H1 (cell line): ENCODE measurements at regions of chr9 and their contacts with region 1.

Region 1: DNA sequence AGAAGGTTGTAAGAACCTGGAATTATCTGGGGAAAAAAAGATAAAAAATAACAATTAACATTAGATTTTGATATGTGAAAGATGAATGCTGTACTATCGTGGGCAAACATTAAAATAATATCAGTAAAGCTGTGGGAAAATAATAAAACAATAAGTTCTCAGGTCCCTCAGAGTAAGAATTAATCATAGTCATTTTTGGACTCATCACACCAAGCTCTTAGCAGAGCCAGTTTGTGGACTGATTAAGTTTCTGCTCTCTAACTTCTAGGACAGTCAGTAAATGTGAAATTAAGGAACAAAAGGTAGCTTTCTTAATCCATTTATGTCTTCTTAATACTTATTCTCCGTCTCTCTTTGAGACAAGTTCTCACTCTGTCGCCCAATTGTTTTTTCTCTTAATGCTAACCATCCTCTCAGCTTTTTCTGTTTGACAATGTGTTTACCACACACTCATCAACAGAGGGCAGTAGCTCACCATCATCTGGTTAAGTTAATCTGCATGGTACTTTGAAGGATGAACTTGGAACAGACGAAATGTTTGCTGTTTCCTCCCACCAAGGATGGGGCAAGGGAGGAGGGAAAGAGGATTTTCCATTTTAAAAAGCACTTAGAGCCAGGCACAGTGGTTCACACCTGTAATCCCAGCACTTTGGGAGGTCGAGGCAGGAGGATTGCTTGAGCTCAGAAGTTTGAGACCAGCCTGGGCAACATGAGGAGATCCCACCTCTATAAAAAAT is 5.3 kb upstream of the ACO1 start:
- DNase-seq: no peak
- H3K4me3 ChIP-seq: no peak overlapping the region
- H3K27ac ChIP-seq: no peak overlapping the region
- H3K4me1 ChIP-seq: peaks cover 0 to 8% (median 1%) of the 10 kb centered on the region in 4 experiments; a peak in 2 of 7 replicates
- H3K27me3 ChIP-seq: peaks cover 2 to 15% (median 8%) of the 10 kb centered on the region in 4 experiments
- CTCF ChIP-seq: peak in 2 of 3 experiments; percentile 78 to 87; a peak in 3 of 4 replicates
- EP300 ChIP-seq: no peak
- POLR2A ChIP-seq: no peak
- RAD21 ChIP-seq: peak; percentile 94

Region 2: DNA sequence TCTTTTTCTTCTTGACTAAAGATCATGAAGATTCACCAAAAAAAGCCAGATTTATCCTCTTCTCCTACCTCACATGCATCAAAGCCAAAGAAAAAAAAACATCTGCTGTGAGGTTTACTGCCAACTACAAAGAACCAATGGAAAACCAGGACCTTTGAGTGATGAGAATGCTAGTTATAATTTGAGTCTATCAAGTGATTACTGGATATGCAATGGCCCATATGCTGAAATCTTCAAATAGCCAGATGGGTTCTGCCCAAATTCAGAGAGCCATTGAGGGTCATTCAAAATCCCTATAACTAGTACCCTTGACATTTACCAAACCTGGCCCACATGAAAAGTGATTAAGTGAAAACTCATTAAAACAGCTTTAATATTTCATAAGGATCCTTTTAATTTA is 73.2 kb before region 1 on chr9:
- CTCF ChIA-PET with region 1: no interaction called
- POLR2A ChIA-PET with region 1: no interaction called
- DNase-seq: no peak
- H3K4me3 ChIP-seq: no peak overlapping the region
- H3K27ac ChIP-seq: no peak overlapping the region
- H3K4me1 ChIP-seq: peaks cover 0 to 6% (median 3%) of the 10 kb centered on the region in 4 experiments; a peak in 1 of 7 replicates
- H3K27me3 ChIP-seq: no peaks in the 10 kb centered on the region
- CTCF ChIP-seq: no peak
- EP300 ChIP-seq: no peak
- POLR2A ChIP-seq: no peak
- RAD21 ChIP-seq: no peak

Region 3: DNA sequence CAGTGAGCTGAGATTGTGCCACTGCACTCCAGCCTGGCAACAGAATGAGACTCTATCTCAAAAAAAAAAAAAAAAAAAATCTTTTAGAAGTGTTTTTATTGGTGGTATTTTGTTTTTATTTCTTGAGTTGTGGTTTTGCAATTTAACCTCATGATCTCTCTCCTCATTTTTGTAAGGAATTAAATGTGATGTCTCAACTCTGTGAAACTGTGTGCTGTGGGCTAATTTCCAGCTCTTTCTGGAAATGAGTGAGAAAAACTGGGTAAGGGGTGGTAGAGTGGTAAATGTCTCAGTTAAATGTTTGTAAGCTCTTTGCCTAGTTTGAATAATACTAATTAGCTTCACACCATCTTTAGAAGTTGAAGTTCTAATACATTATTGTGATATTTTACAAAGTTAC is 34.3 kb after region 1 on chr9:
- CTCF ChIA-PET with region 1: interaction called, 48 read pairs
- POLR2A ChIA-PET with region 1: no interaction called
- DNase-seq: no peak
- H3K4me3 ChIP-seq: no peak overlapping the region
- H3K27ac ChIP-seq: no peak overlapping the region
- H3K4me1 ChIP-seq: no peaks in the 10 kb centered on the region
- H3K27me3 ChIP-seq: no peaks in the 10 kb centered on the region
- CTCF ChIP-seq: no peak
- EP300 ChIP-seq: no peak
- POLR2A ChIP-seq: no peak
- RAD21 ChIP-seq: no peak

Region 4: DNA sequence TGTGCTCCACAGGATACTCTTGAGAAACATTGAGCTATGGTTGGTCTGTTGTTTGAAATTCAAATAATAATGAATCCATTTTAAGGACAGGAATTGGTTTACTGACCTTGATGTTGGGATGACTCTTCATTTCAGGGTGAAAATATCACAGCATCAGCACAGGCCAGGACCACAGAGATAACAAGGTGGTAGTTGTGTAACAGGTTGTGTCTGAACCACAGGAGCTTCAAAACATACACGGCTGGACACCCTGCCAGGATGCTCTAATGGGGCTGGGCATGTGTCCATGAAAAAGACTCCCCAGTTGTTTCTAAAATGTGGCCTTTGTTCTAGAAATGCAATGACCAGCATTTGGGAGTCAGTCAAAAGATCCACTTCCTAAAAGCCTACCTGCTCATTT is 75.1 kb after region 1 on chr9:
- CTCF ChIA-PET with region 1: interaction called, 11 read pairs
- POLR2A ChIA-PET with region 1: interaction called, 3 read pairs
- DNase-seq: no peak
- H3K4me3 ChIP-seq: no peak overlapping the region
- H3K27ac ChIP-seq: no peak overlapping the region
- H3K4me1 ChIP-seq: peaks cover 0 to 4% (median 0%) of the 10 kb centered on the region in 4 experiments; a peak in 2 of 7 replicates
- H3K27me3 ChIP-seq: no peaks in the 10 kb centered on the region
- CTCF ChIP-seq: no peak
- EP300 ChIP-seq: no peak
- POLR2A ChIP-seq: no peak
- RAD21 ChIP-seq: no peak

Region 5: DNA sequence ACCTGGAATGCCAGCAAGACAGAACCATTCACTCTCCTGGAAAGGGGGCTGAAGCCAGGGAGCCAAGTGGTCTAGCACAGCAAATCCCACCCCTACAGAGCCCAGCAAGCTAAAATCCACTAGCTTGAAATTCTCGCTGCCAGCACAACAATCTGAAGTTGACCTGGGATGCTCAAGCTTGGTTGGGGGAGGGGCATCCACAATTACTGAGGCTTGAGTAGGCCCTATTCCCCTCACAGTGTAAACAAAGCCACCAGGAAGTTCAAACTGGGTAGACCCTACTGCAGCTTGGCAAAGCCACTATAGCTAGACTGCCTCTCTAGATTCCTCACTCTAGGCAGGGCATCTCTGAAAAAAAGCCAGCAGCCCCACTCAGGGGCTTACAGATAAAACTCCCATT is 129.6 kb after region 1 on chr9:
- CTCF ChIA-PET with region 1: interaction called, 17 read pairs
- POLR2A ChIA-PET with region 1: no interaction called
- DNase-seq: peak in 1 of 2 experiments; percentile 48
- H3K4me3 ChIP-seq: no peak overlapping the region
- H3K27ac ChIP-seq: no peak overlapping the region
- H3K4me1 ChIP-seq: peaks cover 0 to 10% (median 4%) of the 10 kb centered on the region in 4 experiments; a peak in 5 of 7 replicates
- H3K27me3 ChIP-seq: no peaks in the 10 kb centered on the region
- CTCF ChIP-seq: no peak
- EP300 ChIP-seq: no peak
- POLR2A ChIP-seq: no peak
- RAD21 ChIP-seq: no peak

Region 6: GRCh38 chr9:32543047-32543446 is 163.9 kb after region 1 on chr9:
- CTCF ChIA-PET with region 1: interaction called, 17 read pairs
- POLR2A ChIA-PET with region 1: no interaction called
- DNase-seq: no peak
- H3K4me3 ChIP-seq: no peak overlapping the region
- H3K27ac ChIP-seq: no peak overlapping the region
- H3K4me1 ChIP-seq: no peaks in the 10 kb centered on the region
- H3K27me3 ChIP-seq: no peaks in the 10 kb centered on the region
- CTCF ChIP-seq: no peak
- EP300 ChIP-seq: no peak
- POLR2A ChIP-seq: no peak
- RAD21 ChIP-seq: no peak

Region 7: GRCh38 chr9:32571969-32572899 is 193.1 kb after region 1 on chr9:
- CTCF ChIA-PET with region 1: interaction called, 248 read pairs
- POLR2A ChIA-PET with region 1: interaction called, 4 read pairs
- DNase-seq: peak in 1 of 2 experiments; percentile 49
- H3K4me3 ChIP-seq: peak overlapping the region; percentile 70 to 98 (median 98)
- H3K27ac ChIP-seq: peak overlapping the region; percentile 81; the same call in 1 of the 2 replicates
- H3K4me1 ChIP-seq: peaks cover 0 to 4% (median under 1%) of the 10 kb centered on the region in 4 experiments; a peak in 2 of 7 replicates
- H3K27me3 ChIP-seq: no peaks in the 10 kb centered on the region
- CTCF ChIP-seq: peak; percentile 51 to 77 (median 71)
- EP300 ChIP-seq: no peak
- POLR2A ChIP-seq: no peak
- RAD21 ChIP-seq: peak; percentile 68 to 77

Region 8: GRCh38 chr9:32968101-32969011 is 589.2 kb after region 1 on chr9:
- CTCF ChIA-PET with region 1: interaction called, 16 read pairs
- POLR2A ChIA-PET with region 1: no interaction called
- DNase-seq: peak in 1 of 2 experiments; percentile 81
- H3K4me3 ChIP-seq: no peak overlapping the region
- H3K27ac ChIP-seq: no peak overlapping the region
- H3K4me1 ChIP-seq: peaks cover 0 to 3% (median 0%) of the 10 kb centered on the region in 4 experiments; a peak in 1 of 7 replicates
- H3K27me3 ChIP-seq: no peaks in the 10 kb centered on the region
- CTCF ChIP-seq: peak in 2 of 3 experiments; percentile 55 to 61; a peak in 3 of 4 replicates
- EP300 ChIP-seq: no peak
- POLR2A ChIP-seq: no peak
- RAD21 ChIP-seq: peak; percentile 77 to 79